ENCODE measurements at regions of chr12 and their contacts with region 1.

Region 1: GRCh38 chr12:122471324-122472226 is 29.2 kb downstream of the ZCCHC8 start:
- DNase-seq: peak; percentile 71
- ATAC-seq: peak; percentile 63
- H3K4me3 ChIP-seq: no peak overlapping the region
- H3K4me3 Mint-ChIP-seq: no peak overlapping the region
- H3K27ac ChIP-seq: peak overlapping the region in 1 of 2 donors; percentile 15
- H3K27ac Mint-ChIP-seq: no peak overlapping the region
- H3K4me1 ChIP-seq: no peaks in the 10 kb centered on the region
- H3K4me1 Mint-ChIP-seq: peaks cover 4% of the 10 kb centered on the region
- H3K27me3 ChIP-seq: no peaks in the 10 kb centered on the region
- H3K27me3 Mint-ChIP-seq: no peaks in the 10 kb centered on the region
- CTCF ChIP-seq: peak; percentile 91

Region 2: DNA sequence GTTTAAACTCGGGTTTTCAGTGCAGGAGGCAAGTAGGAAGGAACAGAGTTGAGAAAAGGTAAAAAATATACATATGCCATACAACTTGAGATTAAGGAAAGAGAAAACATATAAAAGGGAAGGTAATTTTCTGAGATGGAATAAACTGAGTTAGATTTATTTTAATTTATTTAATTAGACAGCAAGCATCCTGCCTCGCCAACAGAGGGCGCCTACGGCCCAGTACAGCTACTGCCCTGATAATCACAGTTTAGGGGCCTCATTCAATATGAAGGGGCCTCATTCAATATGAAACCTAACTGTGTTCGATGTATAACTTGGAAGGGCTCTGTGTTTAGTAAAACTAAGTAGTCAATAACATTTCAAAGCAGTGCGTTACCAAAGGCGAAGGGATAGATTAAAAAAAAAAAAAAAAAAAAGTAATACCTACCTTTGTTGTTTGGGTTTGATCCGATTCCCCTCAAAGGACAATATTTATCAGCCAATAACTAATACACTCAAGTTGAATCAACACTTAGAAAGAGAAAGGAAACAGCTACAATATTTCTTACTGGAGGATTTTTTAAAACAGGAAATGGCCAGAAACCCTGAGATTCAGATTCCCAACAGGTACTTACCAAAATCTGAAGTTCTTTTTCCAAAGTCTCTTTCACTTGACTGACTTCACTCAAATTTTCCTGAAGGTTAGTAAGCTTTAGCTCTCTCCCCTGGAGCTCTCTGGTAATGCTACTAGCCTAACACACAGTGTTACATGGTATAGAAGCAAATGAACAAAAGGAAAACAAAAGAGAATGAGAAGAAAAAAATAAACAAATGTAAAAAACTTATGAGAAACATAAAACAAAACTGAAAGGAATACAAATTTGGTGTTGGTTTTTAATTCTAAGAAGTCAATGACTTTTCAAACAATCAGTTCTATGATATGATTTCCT is 135.3 kb before region 1 on chr12:
- CTCF ChIA-PET with region 1: interaction called, 13 read pairs
- POLR2A ChIA-PET with region 1: no interaction called
- intact Hi-C with region 1: no loop called
- DNase-seq: peak; percentile 50
- ATAC-seq: no peak
- H3K4me3 ChIP-seq: no peak overlapping the region
- H3K4me3 Mint-ChIP-seq: no peak overlapping the region
- H3K27ac ChIP-seq: peak overlapping the region in 1 of 2 donors; percentile 19
- H3K27ac Mint-ChIP-seq: no peak overlapping the region
- H3K4me1 ChIP-seq: no peaks in the 10 kb centered on the region
- H3K4me1 Mint-ChIP-seq: no peaks in the 10 kb centered on the region
- H3K27me3 ChIP-seq: no peaks in the 10 kb centered on the region
- H3K27me3 Mint-ChIP-seq: no peaks in the 10 kb centered on the region
- CTCF ChIP-seq: peak; percentile 78

Region 3: DNA sequence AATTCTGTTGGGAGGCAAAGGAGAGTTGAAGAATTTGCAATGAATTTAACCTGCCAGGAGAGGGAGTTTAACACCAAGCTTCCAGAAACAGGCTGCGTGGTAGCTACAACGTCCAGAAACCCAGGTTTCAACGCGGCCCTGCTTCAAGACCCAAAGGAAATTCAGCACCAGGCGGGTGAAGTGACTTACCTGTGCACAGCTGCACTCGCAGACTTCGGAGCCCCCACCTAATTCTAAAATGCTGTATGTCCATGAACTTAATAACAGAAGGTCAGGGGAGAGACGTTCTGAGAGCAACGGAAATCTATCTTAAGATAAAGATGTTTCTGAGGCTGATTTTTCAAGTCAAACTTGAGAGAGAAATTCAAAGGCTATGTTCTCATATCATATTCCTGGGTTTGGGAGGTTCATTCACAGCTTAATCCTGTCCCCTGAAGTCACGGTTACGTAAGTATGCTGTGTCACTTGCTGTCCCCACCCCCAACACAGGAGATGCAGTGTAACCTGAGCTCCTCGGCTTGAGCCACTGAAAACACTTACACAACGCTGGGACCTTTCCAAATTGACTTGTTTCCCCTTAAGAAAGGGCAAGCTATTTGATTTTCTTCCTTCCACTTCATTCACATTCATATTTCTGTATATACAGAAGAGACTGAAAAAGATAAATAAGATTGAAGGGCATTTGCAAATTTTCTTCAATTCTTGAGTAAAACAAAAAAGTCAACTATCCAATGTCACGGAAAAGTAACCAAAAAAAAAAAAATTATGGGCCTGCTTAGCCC is 71.8 kb before region 1 on chr12:
- CTCF ChIA-PET with region 1: interaction called, 374 read pairs
- POLR2A ChIA-PET with region 1: interaction called, 5 read pairs
- intact Hi-C with region 1: loop called (anchors 1 kb)
- DNase-seq: peak; percentile 77
- ATAC-seq: peak; percentile 66
- H3K4me3 ChIP-seq: peak overlapping the region in 1 of 5 experiments; percentile 6
- H3K4me3 Mint-ChIP-seq: peak overlapping the region; percentile 75
- H3K27ac ChIP-seq: peak overlapping the region in 1 of 2 donors; percentile 38
- H3K27ac Mint-ChIP-seq: peak overlapping the region; percentile 73
- H3K4me1 ChIP-seq: peaks cover 23 to 31% of the 10 kb centered on the region in 2 donors
- H3K4me1 Mint-ChIP-seq: peaks cover 31% of the 10 kb centered on the region
- H3K27me3 ChIP-seq: no peaks in the 10 kb centered on the region
- H3K27me3 Mint-ChIP-seq: no peaks in the 10 kb centered on the region
- CTCF ChIP-seq: peak; percentile 87

Region 4: DNA sequence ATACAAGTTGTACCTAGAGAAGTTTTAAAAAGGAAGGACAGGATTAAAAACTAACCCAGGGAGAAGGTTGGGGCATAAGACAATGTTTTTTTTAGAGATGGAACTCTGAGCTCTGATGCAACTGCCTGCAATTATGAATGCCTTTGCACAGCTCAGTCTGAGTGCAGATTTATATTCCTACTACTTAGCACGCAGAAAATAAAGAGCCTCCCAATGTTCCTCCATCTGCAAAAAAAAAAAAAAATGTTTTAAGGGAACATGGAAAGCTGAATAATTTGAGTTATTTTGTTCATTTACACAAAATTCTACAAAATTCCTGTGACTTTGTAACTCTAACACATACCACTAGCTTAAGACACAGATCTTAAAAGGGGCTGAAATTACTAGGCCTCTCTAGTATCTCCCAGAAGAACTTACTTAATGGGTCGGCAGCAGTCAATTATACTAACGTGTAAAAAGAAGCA is 64.8 kb before region 1 on chr12:
- CTCF ChIA-PET with region 1: interaction called, 374 read pairs
- POLR2A ChIA-PET with region 1: no interaction called
- intact Hi-C with region 1: no loop called
- DNase-seq: no peak
- ATAC-seq: no peak
- H3K4me3 ChIP-seq: no peak overlapping the region
- H3K4me3 Mint-ChIP-seq: no peak overlapping the region
- H3K27ac ChIP-seq: peak overlapping the region in 1 of 2 donors; percentile 48
- H3K27ac Mint-ChIP-seq: peak overlapping the region; percentile 59
- H3K4me1 ChIP-seq: peaks cover 22 to 35% of the 10 kb centered on the region in 2 donors
- H3K4me1 Mint-ChIP-seq: peaks cover 37% of the 10 kb centered on the region
- H3K27me3 ChIP-seq: no peaks in the 10 kb centered on the region
- H3K27me3 Mint-ChIP-seq: no peaks in the 10 kb centered on the region
- CTCF ChIP-seq: no peak

Region 5: DNA sequence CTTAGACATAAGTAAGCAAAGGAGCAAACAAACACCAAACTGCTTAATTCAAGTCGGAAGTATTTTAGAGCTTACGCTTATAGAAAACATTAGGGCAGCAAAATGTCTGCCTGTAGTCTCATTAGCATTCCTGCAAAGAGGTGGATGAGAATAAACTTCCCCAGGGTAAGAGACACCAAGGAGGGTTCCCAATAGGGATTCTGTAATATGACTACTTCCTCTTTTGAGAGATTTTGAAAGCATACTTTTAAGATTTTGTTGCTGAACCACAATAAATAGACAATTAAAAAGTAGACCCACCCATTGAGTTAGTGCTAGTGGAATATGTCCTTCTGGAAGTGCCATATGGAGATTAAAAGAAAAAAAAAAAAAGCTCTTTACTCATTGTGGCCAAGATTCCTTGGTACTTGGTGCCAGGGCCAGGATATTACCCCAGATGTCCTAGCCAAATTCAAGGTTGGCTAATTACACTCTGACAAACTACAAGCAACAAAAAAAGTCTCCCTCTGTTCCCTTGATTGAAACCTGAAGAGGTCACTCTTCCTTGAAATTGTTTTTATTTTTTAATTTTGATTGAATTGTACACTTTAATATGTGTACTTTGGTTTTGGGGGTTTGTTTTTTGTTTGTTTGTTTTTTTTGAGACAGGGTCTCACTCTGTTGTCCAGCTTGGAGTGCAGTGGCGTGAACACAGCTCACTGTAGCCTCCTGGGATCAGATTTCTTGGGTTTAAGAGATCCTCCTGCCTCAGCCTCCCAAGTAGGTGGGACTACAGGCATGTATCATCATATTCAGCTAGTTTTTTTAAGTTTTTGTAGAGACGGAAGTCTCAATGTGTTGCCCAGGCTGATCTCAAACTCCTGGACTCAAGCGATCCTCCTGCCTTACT is 57.8 kb before region 1 on chr12:
- CTCF ChIA-PET with region 1: interaction called, 17 read pairs
- POLR2A ChIA-PET with region 1: no interaction called
- intact Hi-C with region 1: no loop called
- DNase-seq: peak; percentile 47
- ATAC-seq: no peak
- H3K4me3 ChIP-seq: no peak overlapping the region
- H3K4me3 Mint-ChIP-seq: peak overlapping the region; percentile 12
- H3K27ac ChIP-seq: peak overlapping the region; percentile 23 to 43
- H3K27ac Mint-ChIP-seq: peak overlapping the region; percentile 4
- H3K4me1 ChIP-seq: peaks cover 22 to 33% of the 10 kb centered on the region in 2 donors
- H3K4me1 Mint-ChIP-seq: peaks cover 43% of the 10 kb centered on the region
- H3K27me3 ChIP-seq: no peaks in the 10 kb centered on the region
- H3K27me3 Mint-ChIP-seq: no peaks in the 10 kb centered on the region
- CTCF ChIP-seq: no peak

Region 6: GRCh38 chr12:122421821-122422729 is 49.5 kb before region 1 on chr12 and contains the start of gene CLIP1:
- CTCF ChIA-PET with region 1: interaction called, 65 read pairs
- POLR2A ChIA-PET with region 1: no interaction called
- intact Hi-C with region 1: loop called (anchors 1 kb)
- DNase-seq: peak; percentile 79
- ATAC-seq: peak; percentile 66
- H3K4me3 ChIP-seq: peak within 1 kb of the TSS; percentile 71 to 87 (median 82)
- H3K4me3 Mint-ChIP-seq: peak within 1 kb of the TSS; percentile 90
- H3K27ac ChIP-seq: peak within 1 kb of the TSS; percentile 73 to 78
- H3K27ac Mint-ChIP-seq: peak within 1 kb of the TSS; percentile 89
- H3K4me1 ChIP-seq: peaks cover 26 to 40% of the 10 kb centered on the region in 2 donors
- H3K4me1 Mint-ChIP-seq: peaks cover 40% of the 10 kb centered on the region
- H3K27me3 ChIP-seq: no peaks in the 10 kb centered on the region
- H3K27me3 Mint-ChIP-seq: no peaks in the 10 kb centered on the region
- CTCF ChIP-seq: peak; percentile 64
- total RNA-seq, gene CLIP1: 62.4 and 64.9 TPM in 2 replicates

Region 7: DNA sequence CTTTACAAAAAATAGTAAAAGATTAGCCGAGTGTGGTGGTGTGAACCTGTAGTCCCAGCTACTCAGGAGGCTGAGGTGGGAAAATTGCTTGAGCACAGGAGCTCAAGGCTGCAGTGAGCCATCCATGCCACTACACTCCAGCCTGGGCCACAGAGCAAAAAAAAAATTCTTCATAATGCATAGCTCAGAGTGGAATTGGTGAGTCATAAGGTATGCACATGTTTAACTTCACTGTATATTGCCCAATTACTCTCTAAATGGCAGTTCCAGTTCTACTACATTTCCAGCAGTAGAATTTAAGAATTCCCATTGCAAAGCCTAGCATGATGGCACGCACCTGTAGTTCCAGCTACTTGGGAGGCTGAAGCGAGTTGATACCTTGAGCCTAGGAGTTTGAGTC is 22.2 kb before region 1 on chr12:
- CTCF ChIA-PET with region 1: interaction called, 21 read pairs
- POLR2A ChIA-PET with region 1: no interaction called
- intact Hi-C with region 1: loop called (anchors 1 kb)
- DNase-seq: no peak
- ATAC-seq: no peak
- H3K4me3 ChIP-seq: no peak overlapping the region
- H3K4me3 Mint-ChIP-seq: no peak overlapping the region
- H3K27ac ChIP-seq: no peak overlapping the region
- H3K27ac Mint-ChIP-seq: no peak overlapping the region
- H3K4me1 ChIP-seq: peaks cover 18% of the 10 kb centered on the region in 2 donors
- H3K4me1 Mint-ChIP-seq: peaks cover 16% of the 10 kb centered on the region
- H3K27me3 ChIP-seq: no peaks in the 10 kb centered on the region
- H3K27me3 Mint-ChIP-seq: no peaks in the 10 kb centered on the region
- CTCF ChIP-seq: no peak

Measured in B cell (primary cell).